A549 (cell line): ENCODE measurements at regions of chr14 and their contacts with region 1.

Region 1: GRCh38 chr14:61837336-61838229 is 75.4 kb downstream of the SNAPC1 start:
- DNase-seq: peak; percentile 60 to 83
- ATAC-seq: peak; percentile 98 to 99
- H3K4me3 ChIP-seq: no peak overlapping the region
- H3K27ac ChIP-seq: peak overlapping the region; percentile 27 to 78; a peak in 4 of 6 replicates
- H3K4me1 ChIP-seq: peaks cover 15% of the 10 kb centered on the region
- CTCF ChIP-seq: peak; percentile 96
- EP300 ChIP-seq: no peak
- POLR2A ChIP-seq: no peak
- RAD21 ChIP-seq: peak; percentile 98 to 99

Region 2: DNA sequence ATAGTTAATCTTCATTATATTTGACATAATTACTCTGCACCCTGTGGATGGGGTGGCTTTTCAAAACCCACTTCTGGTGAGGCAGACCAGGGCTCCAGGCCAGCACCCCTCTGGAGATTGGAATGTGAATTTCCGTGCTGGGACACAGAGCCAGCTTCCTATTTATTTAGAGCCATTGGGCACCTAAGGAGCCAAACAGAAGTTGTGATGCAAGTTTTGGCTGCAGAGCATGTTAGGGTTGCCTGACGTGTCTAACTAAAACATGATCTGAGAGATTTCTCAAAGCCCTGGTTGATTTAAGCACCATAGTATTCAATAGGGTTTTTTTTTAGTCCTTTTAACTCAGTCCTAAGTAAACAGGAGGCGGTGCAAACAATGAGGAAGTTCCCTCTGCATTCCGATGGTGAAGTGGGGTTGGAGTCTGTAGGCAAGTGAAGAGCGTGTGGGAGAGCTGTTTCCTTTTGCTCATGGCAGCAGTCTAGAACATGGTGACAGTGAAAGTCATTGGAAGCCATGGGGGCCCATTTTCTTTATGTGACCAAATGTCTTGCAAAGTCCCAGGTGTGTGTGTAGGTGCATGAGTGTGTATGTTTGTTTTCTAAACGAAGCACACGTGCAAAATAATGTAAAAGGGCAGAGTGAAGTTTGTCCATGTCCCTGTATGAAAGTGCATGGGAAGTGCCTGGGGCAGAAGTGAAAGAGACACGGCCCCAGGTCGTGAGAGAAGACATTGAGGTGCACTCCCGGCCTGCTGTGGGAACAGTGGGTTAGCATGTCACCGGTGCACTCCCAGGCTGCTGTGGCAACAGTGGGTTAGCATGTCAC is 398.5 kb before region 1 on chr14:
- CTCF ChIA-PET with region 1: interaction called, 11 read pairs
- POLR2A ChIA-PET with region 1: no interaction called
- DNase-seq: peak; percentile 74 to 76
- ATAC-seq: peak; percentile 91 to 94
- H3K4me3 ChIP-seq: peak overlapping the region; percentile 7; the same call in 2 of the 3 replicates
- H3K27ac ChIP-seq: peak overlapping the region; percentile 71 to 88
- H3K4me1 ChIP-seq: peaks cover 50% of the 10 kb centered on the region
- CTCF ChIP-seq: no peak
- EP300 ChIP-seq: peak; percentile 78 to 94; a peak in 3 of 5 replicates
- POLR2A ChIP-seq: no peak
- RAD21 ChIP-seq: no peak; a peak in 1 of 5 replicates

Region 3: DNA sequence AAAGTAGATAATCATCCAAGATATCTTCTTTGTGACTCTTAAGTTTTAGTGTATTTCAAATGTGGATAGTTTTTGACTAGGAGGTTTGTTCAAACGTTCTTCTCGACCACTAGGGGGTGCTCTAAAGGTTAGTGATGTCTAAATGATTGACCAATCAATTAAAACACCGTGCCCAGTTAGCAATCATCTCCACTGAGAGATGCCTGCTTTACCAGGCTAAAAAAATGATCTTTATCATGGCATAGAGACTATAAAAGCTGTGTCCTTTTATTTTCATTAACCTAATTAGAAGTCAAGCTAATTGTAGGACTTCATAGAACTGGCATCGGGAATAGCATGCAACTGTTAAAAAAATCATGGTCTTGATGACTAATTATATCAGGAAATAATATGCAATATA is 362.3 kb before region 1 on chr14:
- CTCF ChIA-PET with region 1: interaction called, 14 read pairs
- POLR2A ChIA-PET with region 1: no interaction called
- DNase-seq: peak; percentile 53 to 80
- ATAC-seq: no peak
- H3K4me3 ChIP-seq: no peak overlapping the region
- H3K27ac ChIP-seq: peak overlapping the region; percentile 95 to 96
- H3K4me1 ChIP-seq: peaks cover 88% of the 10 kb centered on the region
- CTCF ChIP-seq: peak; percentile 81
- EP300 ChIP-seq: no peak
- POLR2A ChIP-seq: no peak
- RAD21 ChIP-seq: peak; percentile 67 to 72

Region 4: DNA sequence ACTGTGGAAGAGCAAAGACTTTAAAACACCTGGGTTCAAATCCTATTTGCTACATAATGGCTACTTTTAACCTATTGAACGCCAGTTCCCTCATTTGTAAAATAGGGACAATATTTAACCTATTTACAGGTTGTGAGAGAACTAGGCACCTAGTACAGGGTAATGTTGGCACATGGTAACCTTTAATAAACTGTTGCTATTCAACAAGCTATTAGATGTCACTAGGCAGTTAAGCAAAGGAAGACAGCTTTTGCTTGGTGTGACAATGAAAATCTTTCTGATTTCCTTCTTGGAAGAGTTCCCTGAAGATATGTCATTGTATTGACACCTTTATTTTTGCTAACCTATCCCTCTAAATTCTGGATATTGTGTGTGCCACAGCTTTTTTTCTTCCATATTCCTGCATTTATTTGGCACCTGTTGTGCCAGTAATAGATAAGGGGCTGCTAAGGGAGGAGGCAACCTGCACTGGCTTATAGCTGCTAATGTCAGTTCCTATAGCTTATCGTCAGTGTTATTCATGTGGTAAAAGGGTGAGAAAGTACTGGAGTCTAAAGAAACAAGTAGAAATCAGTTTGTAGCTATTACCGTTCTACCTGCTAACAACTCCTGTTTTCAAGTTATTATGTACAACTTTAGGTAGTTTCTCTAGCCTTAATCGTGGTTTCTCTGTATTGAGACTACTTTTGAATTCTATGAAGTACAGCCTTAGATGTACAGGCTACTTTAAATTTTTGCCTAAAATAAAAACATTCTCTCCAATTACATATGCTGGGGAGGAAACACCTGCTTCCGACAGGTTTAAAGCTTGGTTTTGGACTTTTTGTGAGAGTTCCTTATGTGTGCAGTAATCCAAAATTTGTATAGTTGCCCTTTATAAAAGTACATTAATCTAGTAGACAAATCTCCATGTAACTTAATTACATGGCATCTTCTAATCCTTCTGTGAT is 118.0 kb before region 1 on chr14:
- CTCF ChIA-PET with region 1: interaction called, 13 read pairs
- POLR2A ChIA-PET with region 1: no interaction called
- DNase-seq: no peak
- ATAC-seq: peak; percentile 12 to 44; a peak in 3 of 6 replicates
- H3K4me3 ChIP-seq: no peak overlapping the region
- H3K27ac ChIP-seq: peak overlapping the region in 1 of 2 experiments; percentile 19; a peak in 2 of 6 replicates
- H3K4me1 ChIP-seq: peaks cover 99% of the 10 kb centered on the region
- CTCF ChIP-seq: no peak
- EP300 ChIP-seq: no peak
- POLR2A ChIP-seq: no peak
- RAD21 ChIP-seq: no peak

Region 5: DNA sequence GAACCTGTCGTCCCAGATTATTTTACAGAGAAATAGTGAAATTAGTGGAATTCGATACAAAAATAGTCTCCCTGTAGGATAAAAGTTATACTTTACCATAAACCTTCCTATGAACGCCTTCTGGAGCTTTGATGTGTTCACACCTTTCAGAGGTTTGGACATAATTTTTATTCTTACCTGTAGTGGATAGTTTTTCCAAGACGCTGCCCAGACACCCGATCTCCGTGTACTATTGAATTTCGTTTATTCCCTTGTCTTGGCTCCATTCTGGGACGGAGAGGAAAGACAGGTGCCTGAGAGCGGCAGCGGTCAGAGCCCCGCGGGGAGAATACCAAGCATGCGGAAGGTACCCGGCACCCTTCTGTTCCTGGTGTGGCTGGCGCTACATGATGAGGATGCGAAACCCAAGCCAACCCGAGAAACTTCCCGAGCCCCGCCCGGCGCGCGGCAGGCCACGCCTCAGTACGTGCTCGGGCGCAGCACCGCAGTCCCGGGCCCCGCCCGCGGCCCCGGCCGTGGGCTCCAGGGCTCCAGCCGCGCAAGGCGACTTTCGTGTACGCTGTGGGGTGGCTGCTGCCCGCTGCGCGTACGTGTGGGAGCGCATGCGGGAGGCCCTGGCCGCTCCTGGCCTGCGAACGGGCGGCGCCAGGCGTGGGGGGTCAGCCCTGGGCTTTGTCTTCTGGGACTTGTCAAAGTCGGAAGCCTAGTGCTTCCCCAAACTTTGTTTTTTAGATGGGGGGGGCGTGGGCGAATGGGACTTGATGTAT is 86.7 kb before region 1 on chr14:
- CTCF ChIA-PET with region 1: interaction called, 10 read pairs
- POLR2A ChIA-PET with region 1: no interaction called
- DNase-seq: peak; percentile 76 to 83
- ATAC-seq: peak; percentile 79 to 85
- H3K4me3 ChIP-seq: peak overlapping the region; percentile 38
- H3K27ac ChIP-seq: peak overlapping the region; percentile 72 to 89
- H3K4me1 ChIP-seq: peaks cover 69% of the 10 kb centered on the region
- CTCF ChIP-seq: no peak
- EP300 ChIP-seq: no peak
- POLR2A ChIP-seq: peak; percentile 63
- RAD21 ChIP-seq: peak in 1 of 2 experiments; percentile 16; a peak in 1 of 5 replicates

Region 6: DNA sequence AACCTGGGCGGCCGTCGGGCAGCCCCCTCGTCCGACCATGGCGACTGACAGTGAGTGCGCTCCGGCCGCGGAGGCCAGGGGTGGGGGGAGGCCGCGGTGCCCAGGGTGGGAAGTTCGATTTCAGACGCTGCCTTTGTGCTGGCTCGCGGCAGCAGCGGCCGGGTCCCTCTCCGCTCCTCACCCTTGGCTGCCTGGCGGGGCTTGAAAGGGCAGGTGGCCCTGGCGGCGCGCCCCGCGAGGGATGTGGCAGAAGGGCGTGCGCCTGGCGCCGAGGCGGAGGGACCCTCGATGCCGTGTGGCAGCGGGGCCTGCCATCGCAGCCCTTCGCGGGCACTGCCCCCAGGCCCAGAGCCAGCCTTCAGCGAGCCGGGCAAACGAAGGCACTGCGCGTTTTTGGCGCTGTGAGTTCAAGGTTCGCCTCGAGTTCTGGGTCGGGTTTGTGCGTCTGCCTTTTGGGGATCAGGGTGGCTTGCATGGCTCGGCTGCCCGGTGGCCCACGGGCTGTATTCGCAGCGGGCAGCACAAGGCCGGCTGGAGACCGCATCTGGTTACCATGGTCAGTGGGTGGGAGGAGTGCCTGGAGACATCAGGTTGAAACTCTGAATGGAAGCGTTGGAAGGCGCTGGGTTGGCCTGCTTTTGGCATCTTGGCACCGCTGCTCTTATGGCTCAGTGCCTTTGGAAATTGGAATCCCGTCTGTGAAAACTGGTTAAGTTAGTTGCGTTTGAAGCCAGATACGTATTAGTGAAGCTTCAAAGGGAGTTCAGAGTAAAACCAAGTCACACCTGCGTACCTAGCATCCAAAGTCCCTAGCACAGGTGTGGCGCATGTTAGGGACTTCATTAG is 24.6 kb before region 1 on chr14:
- CTCF ChIA-PET with region 1: interaction called, 18 read pairs
- POLR2A ChIA-PET with region 1: no interaction called
- DNase-seq: no peak
- ATAC-seq: peak; percentile 65 to 75
- H3K4me3 ChIP-seq: peak overlapping the region; percentile 58
- H3K27ac ChIP-seq: peak overlapping the region; percentile 23 to 78; a peak in 3 of 6 replicates
- H3K4me1 ChIP-seq: no peaks in the 10 kb centered on the region; the same call in 2 of the 3 replicates
- CTCF ChIP-seq: no peak
- EP300 ChIP-seq: no peak
- POLR2A ChIP-seq: no peak
- RAD21 ChIP-seq: no peak

Region 7: GRCh38 chr14:61847861-61848260 is 10.3 kb after region 1 on chr14:
- CTCF ChIA-PET with region 1: interaction called, 17 read pairs
- POLR2A ChIA-PET with region 1: no interaction called
- DNase-seq: no peak
- ATAC-seq: no peak
- H3K4me3 ChIP-seq: no peak overlapping the region
- H3K27ac ChIP-seq: no peak overlapping the region
- H3K4me1 ChIP-seq: no peaks in the 10 kb centered on the region
- CTCF ChIP-seq: no peak
- EP300 ChIP-seq: no peak
- POLR2A ChIP-seq: no peak
- RAD21 ChIP-seq: no peak

Region 8: GRCh38 chr14:62027958-62028357 is 190.4 kb after region 1 on chr14:
- CTCF ChIA-PET with region 1: no interaction called
- POLR2A ChIA-PET with region 1: no interaction called
- DNase-seq: no peak
- ATAC-seq: no peak
- H3K4me3 ChIP-seq: no peak overlapping the region
- H3K27ac ChIP-seq: no peak overlapping the region
- H3K4me1 ChIP-seq: no peaks in the 10 kb centered on the region
- CTCF ChIP-seq: no peak
- EP300 ChIP-seq: no peak
- POLR2A ChIP-seq: no peak
- RAD21 ChIP-seq: no peak